ENCODE measurements at regions of chr5 and their contacts with region 1.

Region 1: GRCh38 chr5:108748401-108749127 is 867 bp downstream of the FER start:
- DNase-seq: peak; percentile 100
- H3K4me3 ChIP-seq: peak overlapping the region; percentile 77 to 86
- H3K27ac ChIP-seq: peak overlapping the region; percentile 95
- H3K4me1 ChIP-seq: peaks cover 6% of the 10 kb centered on the region
- H3K27me3 ChIP-seq: no peaks in the 10 kb centered on the region
- CTCF ChIP-seq: peak in 1 of 3 experiments; percentile 7
- POLR2A ChIP-seq: peak; percentile 54 to 98

Region 2: GRCh38 chr5:108727651-108728565 is 20.7 kb before region 1 on chr5:
- intact Hi-C with region 1: loop called (anchors 2 kb)
- DNase-seq: peak in 1 of 2 donors; percentile 93
- H3K4me3 ChIP-seq: peak overlapping the region; percentile 71 to 74
- H3K27ac ChIP-seq: peak overlapping the region; percentile 89
- H3K4me1 ChIP-seq: peaks cover 15% of the 10 kb centered on the region
- H3K27me3 ChIP-seq: no peaks in the 10 kb centered on the region
- CTCF ChIP-seq: no peak
- POLR2A ChIP-seq: peak in 1 of 2 donors; percentile 52

Region 3: GRCh38 chr5:108798513-108799265 is 50.1 kb after region 1 on chr5:
- intact Hi-C with region 1: no loop called
- DNase-seq: no peak
- H3K4me3 ChIP-seq: no peak overlapping the region
- H3K27ac ChIP-seq: no peak overlapping the region
- H3K4me1 ChIP-seq: no peaks in the 10 kb centered on the region
- H3K27me3 ChIP-seq: no peaks in the 10 kb centered on the region
- CTCF ChIP-seq: no peak
- POLR2A ChIP-seq: no peak

Measured in vagina (tissue), 2 donors.